H1 (cell line): ENCODE measurements at regions of chr16 and their contacts with region 1.

Region 1: DNA sequence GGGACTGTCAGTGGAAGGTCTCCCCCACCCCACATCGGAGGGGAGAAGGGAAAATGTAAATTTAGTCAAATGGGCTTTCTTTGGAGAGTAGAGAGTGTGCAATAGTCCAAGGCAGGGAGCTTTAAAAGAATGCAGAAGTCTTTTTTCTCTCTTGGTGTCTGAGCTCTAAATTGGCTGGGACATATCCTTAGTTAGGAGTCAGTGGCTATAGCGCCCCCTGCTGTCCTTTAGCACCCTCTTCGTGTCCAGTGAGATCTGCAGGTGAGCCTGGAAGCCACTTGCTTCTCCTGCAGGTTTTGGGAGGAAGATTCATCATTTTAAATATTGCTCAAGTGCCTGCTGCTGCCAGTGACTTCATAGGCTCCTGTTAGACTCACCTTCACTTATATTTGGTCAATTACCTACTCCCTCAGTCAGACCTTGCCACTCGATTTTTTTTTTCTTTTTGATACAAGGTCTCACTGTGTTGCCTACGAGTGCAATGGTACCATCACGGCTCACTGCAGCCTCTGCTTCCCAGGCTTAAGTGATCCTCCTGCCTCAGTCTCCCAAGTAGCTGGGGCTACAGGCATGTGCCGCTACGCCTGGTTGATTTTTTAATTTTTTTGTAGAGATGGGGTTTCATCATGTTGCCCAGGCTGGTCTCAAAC is 174.8 kb downstream of the PRKCB start:
- DNase-seq: peak; percentile 10 to 80
- H3K4me3 ChIP-seq: no peak overlapping the region
- H3K27ac ChIP-seq: no peak overlapping the region
- H3K4me1 ChIP-seq: no peaks in the 10 kb centered on the region
- H3K27me3 ChIP-seq: no peaks in the 10 kb centered on the region
- CTCF ChIP-seq: peak; percentile 72 to 83 (median 82)
- EP300 ChIP-seq: no peak
- POLR2A ChIP-seq: no peak
- RAD21 ChIP-seq: peak; percentile 83 to 89

Region 2: GRCh38 chr16:23734176-23734893 is 276.2 kb before region 1 on chr16:
- CTCF ChIA-PET with region 1: interaction called, 14 read pairs
- POLR2A ChIA-PET with region 1: no interaction called
- DNase-seq: no peak
- H3K4me3 ChIP-seq: no peak overlapping the region
- H3K27ac ChIP-seq: no peak overlapping the region
- H3K4me1 ChIP-seq: no peaks in the 10 kb centered on the region; a peak in 5 of 7 replicates
- H3K27me3 ChIP-seq: no peaks in the 10 kb centered on the region
- CTCF ChIP-seq: no peak
- EP300 ChIP-seq: no peak
- POLR2A ChIP-seq: no peak
- RAD21 ChIP-seq: no peak

Region 3: DNA sequence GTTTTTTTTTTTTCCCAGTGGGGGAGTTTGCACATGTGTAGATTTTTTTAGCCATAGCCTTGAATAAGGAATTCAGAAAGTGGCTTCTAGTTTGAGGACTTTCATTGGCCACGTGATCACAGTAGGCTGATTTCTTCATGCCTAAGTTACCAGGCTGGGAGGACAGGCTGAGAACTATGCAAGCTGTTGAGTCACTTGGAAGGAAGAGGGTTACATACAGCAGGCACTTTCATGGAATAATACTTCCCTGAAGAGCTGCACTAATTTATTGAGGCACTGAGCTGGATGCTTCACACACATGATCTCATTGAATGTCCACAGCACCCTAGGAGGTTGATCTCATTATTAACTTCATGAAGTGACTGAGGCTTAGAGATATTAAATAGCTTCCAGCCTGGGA is 152.0 kb before region 1 on chr16:
- CTCF ChIA-PET with region 1: interaction called, 11 read pairs
- POLR2A ChIA-PET with region 1: no interaction called
- DNase-seq: no peak
- H3K4me3 ChIP-seq: no peak overlapping the region
- H3K27ac ChIP-seq: no peak overlapping the region
- H3K4me1 ChIP-seq: peaks cover 0 to 8% (median 3%) of the 10 kb centered on the region in 4 experiments; a peak in 2 of 7 replicates
- H3K27me3 ChIP-seq: peaks cover 2 to 16% (median 7%) of the 10 kb centered on the region in 4 experiments; a peak in 5 of 7 replicates
- CTCF ChIP-seq: no peak
- EP300 ChIP-seq: no peak
- POLR2A ChIP-seq: no peak
- RAD21 ChIP-seq: no peak

Region 4: GRCh38 chr16:23877107-23878090 is 133.2 kb before region 1 on chr16:
- CTCF ChIA-PET with region 1: interaction called, 52 read pairs
- POLR2A ChIA-PET with region 1: no interaction called
- DNase-seq: no peak
- H3K4me3 ChIP-seq: no peak overlapping the region
- H3K27ac ChIP-seq: no peak overlapping the region
- H3K4me1 ChIP-seq: no peaks in the 10 kb centered on the region
- H3K27me3 ChIP-seq: no peaks in the 10 kb centered on the region
- CTCF ChIP-seq: peak; percentile 32 to 47 (median 33); a peak in 3 of 4 replicates
- EP300 ChIP-seq: no peak
- POLR2A ChIP-seq: no peak
- RAD21 ChIP-seq: peak; percentile 55 to 67

Region 5: GRCh38 chr16:24022797-24023196 is 12.2 kb after region 1 on chr16:
- CTCF ChIA-PET with region 1: interaction called, 15 read pairs
- POLR2A ChIA-PET with region 1: no interaction called
- DNase-seq: no peak
- H3K4me3 ChIP-seq: no peak overlapping the region
- H3K27ac ChIP-seq: no peak overlapping the region
- H3K4me1 ChIP-seq: no peaks in the 10 kb centered on the region
- H3K27me3 ChIP-seq: no peaks in the 10 kb centered on the region
- CTCF ChIP-seq: no peak
- EP300 ChIP-seq: no peak
- POLR2A ChIP-seq: no peak
- RAD21 ChIP-seq: no peak

Region 6: GRCh38 chr16:24139282-24139681 is 128.7 kb after region 1 on chr16:
- CTCF ChIA-PET with region 1: no interaction called
- POLR2A ChIA-PET with region 1: no interaction called
- DNase-seq: peak in 1 of 2 experiments; percentile 41
- H3K4me3 ChIP-seq: peak overlapping the region in 1 of 4 experiments; percentile 25; a peak in 1 of 8 replicates
- H3K27ac ChIP-seq: peak overlapping the region; percentile 78
- H3K4me1 ChIP-seq: peaks cover 7 to 27% (median 24%) of the 10 kb centered on the region in 4 experiments; a peak in 6 of 7 replicates
- H3K27me3 ChIP-seq: no peaks in the 10 kb centered on the region
- CTCF ChIP-seq: no peak
- EP300 ChIP-seq: peak in 1 of 2 experiments; percentile 91; a peak in 2 of 3 replicates
- POLR2A ChIP-seq: 0 out of 3 replicates have a peak, but pooled peaks of 1 of the 2 experiments have one; percentile 40
- RAD21 ChIP-seq: 0 out of 4 replicates have a peak, but pooled peaks of 1 of the 2 experiments have one; percentile 3